CD4-positive, alpha-beta T cell (primary cell): ENCODE measurements at regions of chr10 and their contacts with region 1.

Region 1: GRCh38 chr10:95601116-95601719 is 40.0 kb upstream of the SORBS1 start:
- DNase-seq: peak; percentile 3 to 67 (median 26)
- ATAC-seq: no peak
- H3K4me3 ChIP-seq: no peak overlapping the region
- H3K4me3 Mint-ChIP-seq: no peak overlapping the region
- H3K27ac ChIP-seq: no peak overlapping the region
- H3K27ac Mint-ChIP-seq: no peak overlapping the region
- H3K4me1 ChIP-seq: no peaks in the 10 kb centered on the region
- H3K4me1 Mint-ChIP-seq: no peaks in the 10 kb centered on the region
- H3K27me3 ChIP-seq: no peaks in the 10 kb centered on the region
- H3K27me3 Mint-ChIP-seq: peaks cover 8% of the 10 kb centered on the region
- CTCF ChIP-seq: peak; percentile 69

Region 2: GRCh38 chr10:95133016-95133752 is 468.0 kb before region 1 on chr10:
- CTCF ChIA-PET with region 1: no interaction called
- POLR2A ChIA-PET with region 1: no interaction called
- intact Hi-C with region 1: loop called in 1 of 2 experiments (anchors 5 kb)
- DNase-seq: peak; percentile 18 to 78 (median 44)
- ATAC-seq: no peak
- H3K4me3 ChIP-seq: no peak overlapping the region
- H3K4me3 Mint-ChIP-seq: no peak overlapping the region
- H3K27ac ChIP-seq: no peak overlapping the region
- H3K27ac Mint-ChIP-seq: no peak overlapping the region
- H3K4me1 ChIP-seq: no peaks in the 10 kb centered on the region
- H3K4me1 Mint-ChIP-seq: no peaks in the 10 kb centered on the region
- H3K27me3 ChIP-seq: no peaks in the 10 kb centered on the region
- H3K27me3 Mint-ChIP-seq: no peaks in the 10 kb centered on the region
- CTCF ChIP-seq: peak; percentile 47

Region 3: GRCh38 chr10:95246579-95247051 is 354.6 kb before region 1 on chr10:
- CTCF ChIA-PET with region 1: no interaction called
- POLR2A ChIA-PET with region 1: no interaction called
- intact Hi-C with region 1: loop called (anchors 2 to 10 kb)
- DNase-seq: peak; percentile 16 to 75 (median 34)
- ATAC-seq: no peak
- H3K4me3 ChIP-seq: no peak overlapping the region
- H3K4me3 Mint-ChIP-seq: no peak overlapping the region
- H3K27ac ChIP-seq: no peak overlapping the region
- H3K27ac Mint-ChIP-seq: no peak overlapping the region
- H3K4me1 ChIP-seq: no peaks in the 10 kb centered on the region
- H3K4me1 Mint-ChIP-seq: no peaks in the 10 kb centered on the region
- H3K27me3 ChIP-seq: no peaks in the 10 kb centered on the region
- H3K27me3 Mint-ChIP-seq: peaks cover 11% of the 10 kb centered on the region
- CTCF ChIP-seq: peak; percentile 58

Region 4: GRCh38 chr10:95430231-95430951 is 170.8 kb before region 1 on chr10:
- CTCF ChIA-PET with region 1: interaction called, 4 read pairs
- POLR2A ChIA-PET with region 1: interaction called, 3 read pairs
- intact Hi-C with region 1: loop called (anchors 1 kb)
- DNase-seq: peak in 12 of 14 experiments; percentile 7 to 71 (median 16)
- ATAC-seq: peak; percentile 75
- H3K4me3 ChIP-seq: no peak overlapping the region
- H3K4me3 Mint-ChIP-seq: no peak overlapping the region
- H3K27ac ChIP-seq: no peak overlapping the region
- H3K27ac Mint-ChIP-seq: no peak overlapping the region
- H3K4me1 ChIP-seq: no peaks in the 10 kb centered on the region
- H3K4me1 Mint-ChIP-seq: no peaks in the 10 kb centered on the region
- H3K27me3 ChIP-seq: no peaks in the 10 kb centered on the region
- H3K27me3 Mint-ChIP-seq: no peaks in the 10 kb centered on the region
- CTCF ChIP-seq: peak; percentile 97